ENCODE measurements at regions of chr4 and their contacts with region 1.

Region 1: DNA sequence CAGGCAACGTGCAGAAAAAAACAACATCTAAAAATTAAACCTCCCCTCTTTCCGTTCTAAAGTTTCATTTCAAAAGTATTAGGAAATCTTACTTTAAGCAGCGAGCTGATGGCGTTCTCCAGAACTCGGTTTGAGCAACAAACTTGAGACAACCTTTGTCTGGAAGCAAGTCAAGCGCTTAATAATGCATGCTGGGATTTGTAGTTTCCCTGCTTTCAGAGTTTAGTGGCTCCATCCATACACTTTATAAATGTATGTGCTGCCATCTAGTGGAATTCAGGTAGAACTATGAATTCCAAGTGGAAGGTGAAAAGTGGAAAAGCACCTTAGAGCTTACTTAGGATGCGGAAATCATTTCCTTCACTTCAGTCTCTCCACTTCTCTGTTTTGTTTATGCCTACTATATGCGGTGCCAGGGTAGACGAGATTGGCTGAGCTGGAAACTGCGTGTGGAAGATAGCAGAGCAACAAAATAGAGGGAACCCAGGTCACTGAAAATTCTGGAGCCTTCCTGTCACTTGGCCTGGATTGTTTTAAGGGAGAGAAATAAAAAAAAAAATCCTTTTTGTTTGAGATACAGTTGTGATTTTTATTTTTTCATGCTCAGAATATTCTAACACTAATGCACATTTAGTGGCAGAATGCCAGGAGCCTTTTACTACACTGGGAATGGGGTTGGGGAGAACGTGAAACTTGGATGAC is at the start of gene BDH2:
- DNase-seq: peak in 7 of 9 donors; percentile 72 to 86 (median 83)
- ATAC-seq: peak; percentile 100
- H3K4me3 ChIP-seq: peak within 1 kb of the TSS; percentile 62
- H3K4me3 Mint-ChIP-seq: peak within 1 kb of the TSS; percentile 88 to 100 (median 94)
- H3K27ac ChIP-seq: peak within 1 kb of the TSS; percentile 69
- H3K27ac Mint-ChIP-seq: peak within 1 kb of the TSS; percentile 81 to 95 (median 92)
- H3K4me1 ChIP-seq: peaks cover 4 to 11% of the 10 kb centered on the region in 2 donors
- H3K4me1 Mint-ChIP-seq: peaks cover 22 to 45% (median 34%) of the 10 kb centered on the region in 7 donors
- H3K27me3 ChIP-seq: no peaks in the 10 kb centered on the region
- H3K27me3 Mint-ChIP-seq: no peaks in the 10 kb centered on the region
- total RNA-seq, gene BDH2: 8.4 to 21.9 (median 18.5) TPM

Region 2: DNA sequence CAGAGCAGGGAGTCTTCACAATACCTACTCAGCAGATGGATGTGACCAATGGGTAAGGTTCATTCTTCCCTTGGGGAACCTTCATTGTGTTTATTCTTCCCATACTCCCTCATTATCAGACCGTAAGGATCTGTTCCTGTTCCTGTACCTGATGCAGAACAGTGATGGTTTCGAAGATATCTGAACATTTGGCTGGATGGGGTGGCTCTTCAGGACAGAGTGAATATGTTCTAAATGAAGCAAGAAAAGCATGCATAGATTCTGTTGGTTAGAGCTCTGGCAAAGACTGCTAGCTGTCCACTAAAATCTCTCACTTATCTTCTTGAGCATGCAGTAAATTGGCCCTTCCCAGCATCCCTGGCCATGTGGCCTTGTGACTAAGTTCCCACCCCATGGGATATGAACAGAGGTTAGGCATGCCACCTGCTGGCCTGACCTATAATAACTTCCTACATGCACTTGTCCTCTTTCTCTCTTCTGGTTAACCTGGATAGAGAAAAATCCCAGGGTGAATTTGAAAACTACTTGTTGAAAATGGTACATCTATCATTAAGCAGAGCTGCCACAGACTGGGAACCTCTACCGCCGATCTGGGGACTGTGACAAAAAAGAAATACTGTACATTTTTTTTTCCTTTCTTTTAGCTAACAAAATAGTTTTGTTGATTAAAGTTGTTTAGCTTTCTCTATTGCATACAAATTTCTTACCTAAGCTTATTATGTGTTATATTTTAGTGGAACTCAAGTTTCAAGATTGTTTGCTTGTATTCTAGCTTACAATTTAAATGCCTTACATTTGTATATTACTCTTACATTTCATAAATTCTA is 1369.3 kb before region 1 on chr4:
- CTCF ChIA-PET with region 1: no interaction called
- POLR2A ChIA-PET with region 1: no interaction called
- intact Hi-C with region 1: loop called in 1 of 2 experiments (anchors 1 kb)
- DNase-seq: peak in 8 of 9 donors; percentile 8 to 36 (median 27)
- ATAC-seq: peak; percentile 80
- H3K4me3 ChIP-seq: no peak overlapping the region
- H3K4me3 Mint-ChIP-seq: no peak overlapping the region
- H3K27ac ChIP-seq: no peak overlapping the region
- H3K27ac Mint-ChIP-seq: no peak overlapping the region
- H3K4me1 ChIP-seq: no peaks in the 10 kb centered on the region
- H3K4me1 Mint-ChIP-seq: peaks cover 0 to 5% (median 0%) of the 10 kb centered on the region in 7 donors
- H3K27me3 ChIP-seq: no peaks in the 10 kb centered on the region
- H3K27me3 Mint-ChIP-seq: peaks cover 6 to 12% (median 9%) of the 10 kb centered on the region in 5 donors

Region 3: DNA sequence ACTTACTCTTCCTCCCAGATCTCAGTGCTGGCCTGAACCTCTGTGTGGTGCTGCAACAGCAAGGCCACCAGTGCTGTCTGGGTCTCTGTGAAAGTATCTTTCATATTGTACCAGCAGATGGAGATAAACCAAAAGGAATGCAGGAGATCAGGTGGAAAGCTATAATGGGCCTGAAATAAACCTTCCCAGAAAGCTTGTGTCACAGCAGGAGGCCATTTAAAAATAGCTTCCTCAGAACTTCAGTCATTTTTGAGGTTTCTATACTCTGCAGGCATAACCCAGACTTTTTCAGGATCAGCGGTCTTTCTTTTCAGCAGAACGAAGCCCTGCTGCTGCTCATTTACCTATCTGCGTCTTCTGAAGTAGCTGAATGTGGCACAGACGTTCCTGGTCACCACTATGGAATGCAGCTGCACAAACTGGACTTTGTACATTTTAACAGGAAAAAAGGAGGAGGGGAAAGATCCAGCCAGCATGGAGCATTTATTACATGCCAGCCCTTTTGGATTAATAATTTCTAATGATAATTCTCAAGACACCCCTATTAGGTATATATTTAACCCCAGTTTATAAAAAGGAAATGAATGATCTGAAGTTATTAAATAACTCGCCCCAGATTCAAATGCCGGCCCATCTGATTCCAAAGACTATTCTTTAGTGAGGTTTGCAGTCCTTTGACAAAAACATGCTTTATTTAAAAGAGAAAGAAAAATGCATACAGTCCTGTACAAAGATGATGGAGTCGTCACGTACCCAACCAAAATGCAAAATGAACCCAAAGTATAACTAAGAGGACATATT is 478.9 kb before region 1 on chr4:
- CTCF ChIA-PET with region 1: interaction called, 3 read pairs
- POLR2A ChIA-PET with region 1: interaction called, 3 read pairs
- intact Hi-C with region 1: loop called (anchors 2 kb)
- DNase-seq: peak in 2 of 9 donors; percentile 34 to 45
- ATAC-seq: peak; percentile 65
- H3K4me3 ChIP-seq: no peak overlapping the region
- H3K4me3 Mint-ChIP-seq: peak overlapping the region in 3 of 10 donors; percentile 9 to 42 (median 32)
- H3K27ac ChIP-seq: no peak overlapping the region
- H3K27ac Mint-ChIP-seq: peak overlapping the region in 7 of 9 donors; percentile 20 to 85 (median 59)
- H3K4me1 ChIP-seq: peaks cover 7 to 18% of the 10 kb centered on the region in 2 donors
- H3K4me1 Mint-ChIP-seq: peaks cover 15 to 73% (median 46%) of the 10 kb centered on the region in 7 donors
- H3K27me3 ChIP-seq: no peaks in the 10 kb centered on the region
- H3K27me3 Mint-ChIP-seq: no peaks in the 10 kb centered on the region

Region 4: GRCh38 chr4:102868781-102869568 is 230.9 kb before region 1 on chr4 and contains the start of gene CISD2:
- CTCF ChIA-PET with region 1: interaction called, 3 read pairs
- POLR2A ChIA-PET with region 1: interaction called, 4 read pairs
- intact Hi-C with region 1: loop called (anchors 1 to 2 kb)
- DNase-seq: peak; percentile 87 to 95 (median 92)
- ATAC-seq: peak; percentile 90
- H3K4me3 ChIP-seq: peak within 1 kb of the TSS; percentile 95
- H3K4me3 Mint-ChIP-seq: peak within 1 kb of the TSS; percentile 88 to 100 (median 96)
- H3K27ac ChIP-seq: peak within 1 kb of the TSS; percentile 99
- H3K27ac Mint-ChIP-seq: peak within 1 kb of the TSS; percentile 98 to 100 (median 99)
- H3K4me1 ChIP-seq: peaks cover 16 to 28% of the 10 kb centered on the region in 2 donors
- H3K4me1 Mint-ChIP-seq: peaks cover 32 to 80% (median 71%) of the 10 kb centered on the region in 7 donors
- H3K27me3 ChIP-seq: no peaks in the 10 kb centered on the region
- H3K27me3 Mint-ChIP-seq: no peaks in the 10 kb centered on the region
- total RNA-seq, gene CISD2: 11.4 to 50.3 (median 13.4) TPM

Region 5: GRCh38 chr4:103046416-103047290 is 53.2 kb before region 1 on chr4:
- CTCF ChIA-PET with region 1: interaction called, 9 read pairs
- POLR2A ChIA-PET with region 1: interaction called, 4 read pairs
- intact Hi-C with region 1: loop called (anchors 1 to 2 kb)
- DNase-seq: peak in 7 of 9 donors; percentile 18 to 65 (median 53)
- ATAC-seq: peak; percentile 98
- H3K4me3 ChIP-seq: no peak overlapping the region
- H3K4me3 Mint-ChIP-seq: no peak overlapping the region
- H3K27ac ChIP-seq: no peak overlapping the region
- H3K27ac Mint-ChIP-seq: peak overlapping the region in 1 of 9 donors; percentile 22
- H3K4me1 ChIP-seq: no peaks in the 10 kb centered on the region
- H3K4me1 Mint-ChIP-seq: peaks cover 0 to 13% (median 0%) of the 10 kb centered on the region in 7 donors
- H3K27me3 ChIP-seq: no peaks in the 10 kb centered on the region
- H3K27me3 Mint-ChIP-seq: no peaks in the 10 kb centered on the region